PC-3 (cell line): ENCODE measurements at regions of chr3 and their contacts with region 1.

Region 1: GRCh38 chr3:155352900-155353490 is 59.5 kb upstream of the STRIT1 start:
- DNase-seq: peak; percentile 84
- ATAC-seq: peak; percentile 62
- H3K4me3 ChIP-seq: no peak overlapping the region
- H3K27ac ChIP-seq: no peak overlapping the region
- H3K4me1 ChIP-seq: peaks cover 3% of the 10 kb centered on the region; the same call in 1 of the 2 replicates
- H3K27me3 ChIP-seq: no peaks in the 10 kb centered on the region
- CTCF ChIP-seq: peak; percentile 81

Region 2: GRCh38 chr3:155554777-155555451 is 201.9 kb after region 1 on chr3:
- CTCF ChIA-PET with region 1: no interaction called
- POLR2A ChIA-PET with region 1: interaction called, 23 read pairs
- intact Hi-C with region 1: no loop called
- DNase-seq: no peak
- ATAC-seq: no peak
- H3K4me3 ChIP-seq: no peak overlapping the region
- H3K27ac ChIP-seq: no peak overlapping the region
- H3K4me1 ChIP-seq: no peaks in the 10 kb centered on the region
- H3K27me3 ChIP-seq: no peaks in the 10 kb centered on the region
- CTCF ChIP-seq: no peak